ENCODE measurements at regions of chrX and their contacts with region 1.

Region 1: GRCh38 chrX:149539283-149540130 is 1.3 kb upstream of the EOLA1 start:
- DNase-seq: peak; percentile 69 to 95 (median 86)
- ATAC-seq: peak; percentile 49 to 59
- H3K4me3 Mint-ChIP-seq: peak overlapping the region; percentile 77 to 97 (median 87)
- H3K27ac Mint-ChIP-seq: peak overlapping the region; percentile 63 to 100 (median 94)
- H3K4me1 Mint-ChIP-seq: peaks cover 0 to 13% (median 7%) of the 10 kb centered on the region in 4 donors
- H3K27me3 Mint-ChIP-seq: no peaks in the 10 kb centered on the region

Region 2: GRCh38 chrX:147911192-147912022 is 1628.1 kb before region 1 on chrX and contains the start of gene FMR1:
- POLR2A ChIA-PET with region 1: interaction called, 14 read pairs
- DNase-seq: peak; percentile 85 to 97 (median 92)
- ATAC-seq: peak; percentile 82 to 83
- H3K4me3 Mint-ChIP-seq: peak within 1 kb of the TSS; percentile 90 to 98 (median 96)
- H3K27ac Mint-ChIP-seq: peak within 1 kb of the TSS; percentile 91 to 98 (median 94)
- H3K4me1 Mint-ChIP-seq: peaks cover 8 to 39% (median 21%) of the 10 kb centered on the region in 4 donors
- H3K27me3 Mint-ChIP-seq: no peaks in the 10 kb centered on the region
- polyA plus RNA-seq, gene FMR1: 5.8 to 11.4 (median 6.7) TPM

Region 3: DNA sequence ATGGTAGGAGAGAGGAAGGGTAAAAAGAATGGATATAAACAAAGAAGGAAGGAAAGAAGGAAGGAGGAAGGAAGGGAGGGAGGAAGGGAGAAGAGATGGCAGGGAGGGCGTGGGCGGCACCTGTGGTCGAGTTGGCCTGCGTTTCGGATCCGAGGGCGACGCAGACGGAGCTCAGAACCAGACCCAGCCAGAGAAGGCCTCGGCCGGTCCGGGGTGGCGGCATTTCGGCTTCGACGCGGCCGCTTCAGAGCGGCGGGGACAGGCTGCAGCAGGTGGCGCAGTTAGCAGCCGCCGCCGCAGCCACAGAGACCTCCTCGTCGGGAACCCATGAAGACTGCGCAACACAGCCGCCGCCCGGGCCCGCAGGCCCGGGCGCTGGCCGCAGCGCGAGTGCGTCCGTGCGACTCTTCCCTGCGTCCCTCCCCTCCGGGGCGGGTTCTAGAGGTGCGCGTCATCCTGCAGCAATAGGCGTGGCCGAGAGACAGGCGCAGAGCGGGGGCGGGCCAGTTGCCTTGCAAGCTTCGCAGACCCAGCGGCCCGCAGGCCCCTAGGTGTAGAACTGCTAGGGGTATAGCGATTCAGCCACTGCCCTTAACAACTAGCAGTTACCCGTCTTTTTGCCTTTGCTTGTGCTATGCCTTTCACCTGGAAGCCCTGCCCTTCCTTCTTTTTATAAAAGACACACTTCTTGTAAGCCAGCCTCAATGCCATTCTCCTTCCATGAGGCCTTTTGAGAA is 34.4 kb before region 1 on chrX and contains the start of gene IDS:
- POLR2A ChIA-PET with region 1: interaction called, 41 read pairs
- DNase-seq: peak; percentile 69 to 95 (median 84)
- ATAC-seq: peak; percentile 61 to 70
- H3K4me3 Mint-ChIP-seq: peak within 1 kb of the TSS; percentile 85 to 99 (median 93)
- H3K27ac Mint-ChIP-seq: peak within 1 kb of the TSS; percentile 95 to 100 (median 97)
- H3K4me1 Mint-ChIP-seq: peaks cover 9 to 41% (median 34%) of the 10 kb centered on the region in 4 donors
- H3K27me3 Mint-ChIP-seq: no peaks in the 10 kb centered on the region
- polyA plus RNA-seq, gene IDS: 65.4 to 98.4 (median 81.1) TPM

Region 4: DNA sequence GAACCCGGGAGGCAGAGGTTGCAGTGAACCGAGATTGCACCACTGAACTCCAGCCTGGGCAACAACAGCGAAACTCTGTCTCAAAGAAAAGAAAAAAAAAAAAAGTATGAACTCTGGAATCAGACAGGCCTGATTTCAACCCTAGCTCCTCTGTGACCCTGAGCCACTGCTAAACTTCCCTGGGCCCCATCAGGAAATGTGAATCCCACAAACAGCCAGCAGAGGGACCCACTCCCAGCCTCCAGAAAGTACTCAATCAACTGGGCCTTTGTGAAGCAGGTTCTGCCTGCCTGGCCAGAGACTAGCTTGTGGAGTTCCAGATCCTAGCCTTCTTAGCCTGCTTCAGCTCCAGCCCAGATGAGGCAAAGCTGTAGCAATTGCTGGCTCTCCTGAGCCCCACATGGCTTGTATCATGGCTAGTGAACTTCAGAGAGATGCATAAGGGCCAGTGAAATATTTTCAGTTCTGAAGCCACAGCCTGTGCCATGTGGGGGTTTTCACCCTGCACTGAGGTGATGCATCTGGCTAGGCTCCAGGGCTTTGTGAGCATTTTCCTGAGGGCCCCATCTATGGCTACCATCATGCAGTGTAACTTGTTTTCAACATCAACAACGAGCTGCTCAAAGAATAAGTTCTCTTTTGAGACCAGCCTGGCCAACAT is 27.2 kb before region 1 on chrX:
- POLR2A ChIA-PET with region 1: interaction called, 21 read pairs
- DNase-seq: peak; percentile 17 to 73 (median 57)
- ATAC-seq: peak; percentile 79 to 82
- H3K4me3 Mint-ChIP-seq: peak overlapping the region in 2 of 10 donors; percentile 33 to 34
- H3K27ac Mint-ChIP-seq: peak overlapping the region in 6 of 10 donors; percentile 43 to 87 (median 68)
- H3K4me1 Mint-ChIP-seq: peaks cover 6 to 33% (median 25%) of the 10 kb centered on the region in 4 donors
- H3K27me3 Mint-ChIP-seq: peaks cover 0 to 2% (median 0%) of the 10 kb centered on the region in 5 donors

Region 5: DNA sequence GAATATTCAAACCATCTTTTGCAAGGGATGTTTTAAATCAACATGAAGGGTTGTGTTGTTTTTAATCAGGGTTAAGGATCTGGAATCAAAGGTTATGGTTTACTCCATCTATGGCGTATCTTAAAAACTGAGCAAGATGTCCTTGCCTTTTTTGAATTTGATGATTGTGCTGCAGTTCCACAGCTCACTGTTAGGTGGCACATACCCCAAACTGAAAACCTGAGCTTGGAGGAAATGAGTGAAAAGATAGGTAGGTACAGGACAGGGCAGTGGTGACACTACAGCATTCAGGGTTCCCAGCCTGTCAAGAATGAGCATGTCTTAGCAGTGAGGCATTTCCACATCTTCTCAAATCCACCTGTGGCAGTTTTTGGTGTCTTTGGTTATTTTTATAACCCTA is 11.8 kb before region 1 on chrX:
- POLR2A ChIA-PET with region 1: interaction called, 23 read pairs
- DNase-seq: peak in 6 of 10 donors; percentile 33 to 65 (median 51)
- ATAC-seq: peak in 1 of 2 donors; percentile 16
- H3K4me3 Mint-ChIP-seq: peak overlapping the region in 4 of 10 donors; percentile 15 to 62 (median 30)
- H3K27ac Mint-ChIP-seq: peak overlapping the region; percentile 43 to 91 (median 70)
- H3K4me1 Mint-ChIP-seq: peaks cover under 1 to 30% (median 12%) of the 10 kb centered on the region in 4 donors
- H3K27me3 Mint-ChIP-seq: no peaks in the 10 kb centered on the region

Region 6: DNA sequence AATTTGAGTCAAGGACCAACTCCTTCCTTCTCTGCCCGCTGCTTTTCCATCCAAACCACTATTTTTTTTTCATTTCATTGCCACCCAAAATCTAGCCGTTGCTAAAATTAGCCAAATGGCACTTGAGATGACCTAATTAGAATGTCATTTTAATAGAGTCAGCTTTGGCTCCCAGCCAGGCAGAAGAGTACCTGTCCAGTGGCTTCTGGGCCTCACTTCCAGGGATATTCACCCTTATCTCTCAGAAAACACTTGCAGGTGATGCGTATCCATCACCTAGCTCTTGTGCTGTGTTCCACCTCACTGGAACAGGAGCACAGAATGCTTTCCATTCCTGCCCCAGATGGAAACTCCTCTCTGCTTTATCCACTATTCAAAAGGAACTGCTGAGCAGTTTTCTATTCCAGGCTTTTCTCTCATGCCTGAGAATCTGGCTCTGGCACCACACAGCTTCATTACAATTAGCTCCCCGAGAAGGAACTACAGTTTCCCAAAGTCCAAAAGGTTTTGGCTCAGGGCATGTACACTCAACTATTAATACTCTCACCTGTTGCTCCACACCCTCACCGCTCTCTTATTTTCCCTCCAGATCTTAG is 29.3 kb after region 1 on chrX:
- POLR2A ChIA-PET with region 1: no interaction called
- DNase-seq: no peak
- ATAC-seq: no peak
- H3K4me3 Mint-ChIP-seq: no peak overlapping the region
- H3K27ac Mint-ChIP-seq: no peak overlapping the region
- H3K4me1 Mint-ChIP-seq: no peaks in the 10 kb centered on the region
- H3K27me3 Mint-ChIP-seq: peaks cover 0 to 4% (median 4%) of the 10 kb centered on the region in 5 donors

Region 7: DNA sequence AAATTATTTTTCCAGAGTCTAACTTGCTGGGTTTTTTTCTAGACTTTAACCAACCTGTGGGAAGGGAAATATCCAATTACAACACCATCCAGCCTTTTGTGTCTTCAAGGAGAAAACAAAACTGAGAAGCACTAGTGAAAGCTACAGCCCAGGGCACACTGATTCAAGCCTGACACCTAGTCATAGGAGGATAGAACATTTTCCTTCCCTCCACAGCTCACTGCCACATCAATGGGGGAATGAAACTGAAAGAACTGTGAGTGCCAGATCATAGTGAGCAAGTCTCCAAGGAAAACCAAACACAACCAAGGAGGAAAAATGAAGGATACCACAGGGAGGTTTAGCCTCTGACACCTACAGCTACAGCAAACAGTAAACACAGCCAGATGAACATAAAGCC is 298.1 kb after region 1 on chrX:
- POLR2A ChIA-PET with region 1: no interaction called
- DNase-seq: no peak
- ATAC-seq: no peak
- H3K4me3 Mint-ChIP-seq: no peak overlapping the region
- H3K27ac Mint-ChIP-seq: no peak overlapping the region
- H3K4me1 Mint-ChIP-seq: peaks cover 0 to 1% (median 0%) of the 10 kb centered on the region in 4 donors
- H3K27me3 Mint-ChIP-seq: peaks cover 0 to under 1% (median 0%) of the 10 kb centered on the region in 5 donors

Region 8: DNA sequence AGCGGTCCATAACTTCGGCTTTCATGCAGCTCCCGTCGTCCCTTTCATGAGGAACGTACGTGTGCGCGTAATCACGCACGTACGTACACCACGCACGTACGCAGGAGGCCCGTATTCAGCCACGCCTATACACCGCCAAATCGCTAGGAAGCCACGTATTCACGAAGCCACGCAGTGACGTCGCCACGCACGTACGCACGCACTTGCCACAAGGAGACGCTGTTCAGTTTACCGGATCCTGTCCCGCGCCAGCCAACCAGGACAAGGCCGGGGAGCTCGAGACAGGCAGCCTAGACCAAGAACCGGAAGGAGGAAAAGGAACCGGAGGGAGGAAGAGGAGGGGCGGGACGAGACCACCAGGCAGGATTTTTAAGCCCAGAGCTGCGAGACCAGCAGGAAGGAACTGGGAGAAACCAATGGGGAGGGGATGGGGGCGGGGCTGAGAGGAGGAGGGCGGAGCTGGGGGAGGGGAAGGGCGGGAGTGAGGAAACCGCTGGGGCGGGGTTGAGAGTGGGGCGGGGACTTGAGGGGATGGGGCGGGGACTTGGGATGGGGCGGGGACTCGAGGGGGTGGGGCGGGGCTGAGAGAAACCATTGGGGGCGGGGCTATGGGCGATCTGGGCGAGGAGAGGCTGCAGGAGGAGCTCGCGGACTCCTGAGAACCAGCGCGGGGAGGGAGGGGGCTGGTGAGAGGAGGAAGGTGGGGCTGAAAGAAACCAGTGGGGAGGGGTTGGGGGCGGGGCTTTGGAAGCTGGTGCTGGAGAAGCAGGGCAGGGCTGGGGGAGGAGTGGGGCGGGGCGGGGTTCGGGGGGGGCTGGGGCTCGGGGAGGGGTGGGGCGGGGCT is 399.1 kb after region 1 on chrX and contains the start of gene EOLA2:
- POLR2A ChIA-PET with region 1: interaction called, 41 read pairs
- DNase-seq: peak; percentile 76 to 97 (median 92)
- ATAC-seq: peak; percentile 55 to 64
- H3K4me3 Mint-ChIP-seq: peak within 1 kb of the TSS; percentile 84 to 97 (median 94)
- H3K27ac Mint-ChIP-seq: peak within 1 kb of the TSS; percentile 94 to 99 (median 98)
- H3K4me1 Mint-ChIP-seq: peaks cover 0 to 5% (median 3%) of the 10 kb centered on the region in 4 donors
- H3K27me3 Mint-ChIP-seq: no peaks in the 10 kb centered on the region
- polyA plus RNA-seq, gene EOLA2: 25.7 to 42.4 (median 26.5) TPM